MCF 10A (cell line): ENCODE measurements at regions of chr7 and their contacts with region 1.

Region 1: DNA sequence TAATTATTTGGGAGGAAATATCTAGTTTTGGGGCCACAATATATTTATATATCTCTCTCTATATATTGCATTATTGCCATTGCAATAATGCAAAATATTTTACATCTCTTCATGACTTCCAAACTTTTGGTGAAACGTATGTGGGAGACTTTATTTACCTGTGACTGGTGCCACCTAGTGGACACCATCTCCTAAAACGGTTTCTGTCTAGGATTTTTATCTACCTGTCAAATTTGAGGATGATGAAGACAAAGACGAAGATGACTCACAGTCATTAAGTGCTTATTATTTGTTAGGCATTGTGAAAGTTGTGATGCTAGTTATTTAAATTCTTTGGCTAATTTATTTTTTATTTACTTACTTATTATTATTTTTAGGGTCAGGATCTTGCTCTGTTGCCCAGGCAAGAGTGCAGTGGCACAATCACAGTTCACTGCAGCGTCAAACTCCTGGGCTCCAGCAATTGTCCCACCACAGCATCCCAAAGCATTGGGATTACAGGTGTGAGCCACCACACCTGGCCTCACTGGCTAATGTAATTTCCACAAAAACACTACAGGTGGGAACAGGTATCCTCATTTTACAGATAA is 18.7 kb upstream of the CBLL1 start:
- DNase-seq: peak; percentile 78
- H3K4me3 Mint-ChIP-seq: no peak overlapping the region
- H3K27ac Mint-ChIP-seq: no peak overlapping the region
- H3K4me1 Mint-ChIP-seq: no peaks in the 10 kb centered on the region
- H3K27me3 Mint-ChIP-seq: peaks cover 23% of the 10 kb centered on the region
- CTCF ChIP-seq: peak; percentile 60

Region 2: GRCh38 chr7:107150375-107151073 is 574.7 kb before region 1 on chr7:
- CTCF ChIA-PET with region 1: no interaction called
- POLR2A ChIA-PET with region 1: no interaction called
- intact Hi-C with region 1: loop called (anchors 1 kb)
- DNase-seq: peak; percentile 71
- H3K4me3 Mint-ChIP-seq: no peak overlapping the region
- H3K27ac Mint-ChIP-seq: no peak overlapping the region
- H3K4me1 Mint-ChIP-seq: peaks cover 12% of the 10 kb centered on the region
- H3K27me3 Mint-ChIP-seq: no peaks in the 10 kb centered on the region
- CTCF ChIP-seq: peak; percentile 59

Region 3: DNA sequence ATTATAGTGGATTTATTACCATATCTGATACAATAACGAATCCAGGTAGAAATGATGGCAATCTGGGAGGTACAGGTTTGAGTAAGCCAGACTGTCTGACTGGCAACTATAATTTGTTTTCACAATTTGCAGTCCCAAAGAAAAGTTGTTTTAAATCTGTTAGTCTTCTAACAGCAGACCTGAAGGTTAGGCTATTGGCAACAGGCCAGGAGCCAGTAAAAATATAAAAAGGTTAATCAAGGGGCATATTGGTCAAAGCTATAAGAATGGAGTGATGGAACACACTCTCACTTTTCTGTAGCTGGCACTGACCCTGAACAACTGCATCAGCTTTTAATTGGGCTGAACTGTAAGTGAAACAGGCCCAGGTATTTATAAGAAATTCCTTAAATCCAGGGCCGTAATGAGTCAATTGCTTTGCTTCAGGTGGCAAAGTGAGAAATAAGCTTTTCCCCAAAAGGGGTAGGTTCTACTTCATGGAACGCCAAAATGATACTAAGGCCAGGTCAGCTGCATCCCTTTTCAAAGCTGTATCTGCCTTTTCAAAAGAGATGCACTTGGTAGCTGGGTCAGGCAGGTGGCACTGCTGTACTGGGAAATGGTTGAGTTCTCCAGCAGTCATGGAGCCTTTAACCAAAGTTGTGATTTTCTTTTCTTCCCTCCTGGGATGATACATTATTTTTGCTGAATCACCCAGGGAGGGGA is 262.4 kb before region 1 on chr7:
- CTCF ChIA-PET with region 1: interaction called, 95 read pairs
- POLR2A ChIA-PET with region 1: no interaction called
- intact Hi-C with region 1: loop called (anchors 1 kb)
- DNase-seq: peak; percentile 78
- H3K4me3 Mint-ChIP-seq: no peak overlapping the region
- H3K27ac Mint-ChIP-seq: no peak overlapping the region
- H3K4me1 Mint-ChIP-seq: peaks cover 5% of the 10 kb centered on the region
- H3K27me3 Mint-ChIP-seq: no peaks in the 10 kb centered on the region
- CTCF ChIP-seq: peak; percentile 82

Region 4: DNA sequence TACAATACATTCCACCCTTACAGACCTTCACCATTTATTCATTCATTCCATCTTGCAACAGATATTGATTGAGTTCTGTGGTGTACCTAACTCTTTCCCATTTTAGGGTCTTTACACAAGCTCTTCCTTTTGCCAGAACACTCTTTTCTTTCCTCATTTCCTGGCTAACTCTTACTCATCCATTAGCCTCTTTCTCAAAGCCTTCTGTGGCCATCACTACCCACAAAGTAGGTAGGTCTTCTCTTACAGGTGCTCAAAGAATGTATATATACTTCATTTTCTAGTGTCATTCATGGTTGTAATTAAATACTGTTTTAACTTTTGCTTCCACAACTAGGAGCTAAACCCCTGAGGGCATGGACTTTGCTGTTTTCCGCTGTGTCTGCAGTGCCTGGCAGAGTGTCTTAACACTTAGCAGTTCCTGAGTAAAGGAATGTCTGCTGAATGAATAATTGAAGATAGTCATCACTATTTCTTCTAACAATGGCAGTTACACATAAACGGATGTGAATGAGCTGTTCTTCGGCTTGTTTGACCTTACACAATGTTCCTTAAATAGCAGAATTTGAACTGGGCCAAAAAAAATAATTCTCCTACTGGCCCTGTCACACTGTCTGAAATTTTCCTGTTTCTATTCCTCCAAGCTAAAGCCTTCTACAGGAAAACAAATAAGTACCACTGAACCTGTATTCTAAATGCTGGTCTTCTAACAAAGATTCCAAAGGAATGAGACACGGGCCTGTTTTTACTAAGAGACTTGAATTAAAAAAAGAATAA is 130.1 kb before region 1 on chr7:
- CTCF ChIA-PET with region 1: interaction called, 7 read pairs
- POLR2A ChIA-PET with region 1: no interaction called
- intact Hi-C with region 1: loop called (anchors 1 kb)
- DNase-seq: peak; percentile 92
- H3K4me3 Mint-ChIP-seq: peak overlapping the region; percentile 33
- H3K27ac Mint-ChIP-seq: peak overlapping the region; percentile 91
- H3K4me1 Mint-ChIP-seq: peaks cover 27% of the 10 kb centered on the region
- H3K27me3 Mint-ChIP-seq: no peaks in the 10 kb centered on the region
- CTCF ChIP-seq: no peak